Naive thymus-derived CD4-positive, alpha-beta T cell (primary cell): ENCODE measurements at regions of chr19 and their contacts with region 1.

Region 1: GRCh38 chr19:37466798-37467607 is at the start of gene ZNF569:
- DNase-seq: peak; percentile 68 to 95 (median 92)
- ATAC-seq: peak; percentile 79
- H3K4me3 ChIP-seq: peak within 1 kb of the TSS; percentile 79
- H3K4me3 Mint-ChIP-seq: peak within 1 kb of the TSS; percentile 91 to 100 (median 95)
- H3K27ac ChIP-seq: peak within 1 kb of the TSS; percentile 96
- H3K27ac Mint-ChIP-seq: peak within 1 kb of the TSS; percentile 93 to 100 (median 98)
- H3K4me1 ChIP-seq: peaks cover 13 to 16% of the 10 kb centered on the region in 2 donors
- H3K4me1 Mint-ChIP-seq: peaks cover 26 to 54% (median 45%) of the 10 kb centered on the region in 7 donors
- H3K27me3 ChIP-seq: no peaks in the 10 kb centered on the region
- H3K27me3 Mint-ChIP-seq: no peaks in the 10 kb centered on the region
- total RNA-seq, gene ZNF569: 4.1 to 16.4 (median 8.5) TPM

Region 2: DNA sequence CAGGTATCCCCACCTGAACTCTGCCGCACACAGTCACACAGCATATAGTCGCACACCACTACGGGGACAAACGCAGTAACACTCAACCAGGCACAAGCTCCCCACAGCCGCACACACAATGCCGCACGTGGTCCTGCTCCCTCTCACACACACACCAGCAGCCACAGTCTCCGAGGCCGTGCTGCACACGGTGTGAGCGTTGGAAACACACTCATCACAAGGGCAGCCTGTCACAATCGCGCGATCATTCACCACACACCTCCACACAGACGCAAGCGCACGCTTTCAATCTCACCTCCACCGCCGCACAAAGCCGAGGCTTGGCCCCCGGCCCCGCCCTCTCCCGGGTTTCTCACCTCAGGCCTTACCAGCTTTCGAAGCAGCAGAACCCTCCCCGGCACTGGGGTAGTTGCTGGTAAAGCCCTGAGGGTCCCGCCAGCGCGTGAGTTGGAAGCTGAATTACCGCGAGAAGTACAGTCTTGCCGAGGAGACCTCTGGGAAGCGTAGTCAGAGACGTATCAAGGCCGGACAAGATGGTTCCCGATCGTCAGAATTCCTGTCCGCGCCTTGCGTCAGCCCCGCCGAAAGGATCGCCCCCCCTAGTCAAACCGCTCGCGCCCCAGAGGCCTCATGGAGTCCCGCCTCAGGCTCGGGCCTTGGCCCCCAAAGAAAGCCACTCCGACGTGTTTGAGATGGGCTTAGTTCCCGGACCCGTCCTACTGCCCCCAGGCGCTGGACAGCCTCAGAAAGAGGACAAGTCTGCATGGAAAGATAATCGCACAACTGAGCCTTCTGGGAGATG is 977.7 kb before region 1 on chr19 and contains the start of gene ZNF566:
- CTCF ChIA-PET with region 1: no interaction called
- POLR2A ChIA-PET with region 1: interaction called, 3 read pairs
- intact Hi-C with region 1: loop called in 1 of 2 experiments (anchors 1 kb)
- DNase-seq: peak; percentile 74 to 98 (median 94)
- ATAC-seq: peak; percentile 95
- H3K4me3 ChIP-seq: peak within 1 kb of the TSS; percentile 97
- H3K4me3 Mint-ChIP-seq: peak within 1 kb of the TSS; percentile 93 to 99 (median 98)
- H3K27ac ChIP-seq: peak within 1 kb of the TSS; percentile 90
- H3K27ac Mint-ChIP-seq: peak within 1 kb of the TSS; percentile 93 to 99 (median 98)
- H3K4me1 ChIP-seq: peaks cover 9 to 10% of the 10 kb centered on the region in 2 donors
- H3K4me1 Mint-ChIP-seq: peaks cover 22 to 43% (median 30%) of the 10 kb centered on the region in 7 donors
- H3K27me3 ChIP-seq: no peaks in the 10 kb centered on the region
- H3K27me3 Mint-ChIP-seq: no peaks in the 10 kb centered on the region
- total RNA-seq, gene ZNF566: 9.2 to 29.8 (median 9.3) TPM

Region 3: DNA sequence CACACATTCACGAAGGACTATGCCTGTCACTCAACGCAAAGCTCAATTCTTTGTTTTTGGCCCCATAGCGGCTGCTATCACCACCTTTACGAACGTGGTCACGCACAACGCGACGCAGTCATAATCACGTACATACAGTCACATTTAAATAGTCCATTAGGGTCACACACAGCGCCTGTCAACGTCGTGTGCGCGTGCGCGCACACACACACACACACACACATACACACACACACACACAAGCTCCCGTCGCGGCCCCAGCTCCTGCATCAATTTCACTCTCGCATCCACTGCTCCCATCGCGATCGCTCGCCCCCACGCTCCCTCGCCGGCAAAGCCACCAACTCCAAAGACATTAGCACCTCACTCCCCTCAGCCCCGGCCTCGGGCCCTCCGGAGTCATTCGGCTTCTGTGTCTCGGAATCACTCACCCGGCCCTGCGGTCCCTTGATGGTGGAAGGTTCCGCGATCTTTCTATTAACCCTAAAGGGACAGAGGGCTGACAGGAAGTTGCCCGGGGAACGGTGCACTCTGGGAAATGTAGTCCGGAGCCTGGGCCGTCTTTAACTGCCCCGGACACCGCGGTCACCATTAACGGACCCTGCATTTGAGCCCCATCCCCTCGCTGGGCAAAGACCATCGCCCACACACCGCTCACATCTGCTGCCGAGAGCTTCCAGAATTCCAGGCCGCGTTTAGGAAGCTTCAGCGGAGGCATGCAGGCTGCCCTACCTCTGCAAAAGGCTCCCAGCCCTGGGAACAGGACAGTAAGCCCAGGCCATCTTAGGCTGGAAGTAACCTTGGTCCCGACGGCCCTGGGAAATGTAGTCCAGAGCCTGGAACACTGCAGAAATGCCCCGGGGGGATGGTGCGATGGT is 628.9 kb before region 1 on chr19 and contains the start of gene ZNF790:
- CTCF ChIA-PET with region 1: no interaction called
- POLR2A ChIA-PET with region 1: interaction called, 5 read pairs
- intact Hi-C with region 1: loop called (anchors 5 kb)
- DNase-seq: peak; percentile 68 to 91 (median 85)
- ATAC-seq: peak; percentile 95
- H3K4me3 ChIP-seq: peak within 1 kb of the TSS; percentile 92
- H3K4me3 Mint-ChIP-seq: peak within 1 kb of the TSS in 1 of 10 donors; percentile 22
- H3K27ac ChIP-seq: peak within 1 kb of the TSS; percentile 92
- H3K27ac Mint-ChIP-seq: peak within 1 kb of the TSS in 5 of 9 donors; percentile 39 to 65 (median 51)
- H3K4me1 ChIP-seq: peaks cover 6 to 11% of the 10 kb centered on the region in 2 donors
- H3K4me1 Mint-ChIP-seq: peaks cover 0 to 21% (median 14%) of the 10 kb centered on the region in 7 donors
- H3K27me3 ChIP-seq: no peaks in the 10 kb centered on the region
- H3K27me3 Mint-ChIP-seq: no peaks in the 10 kb centered on the region
- total RNA-seq, gene ZNF790: 2.6 to 14.4 (median 7.3) TPM

Region 4: DNA sequence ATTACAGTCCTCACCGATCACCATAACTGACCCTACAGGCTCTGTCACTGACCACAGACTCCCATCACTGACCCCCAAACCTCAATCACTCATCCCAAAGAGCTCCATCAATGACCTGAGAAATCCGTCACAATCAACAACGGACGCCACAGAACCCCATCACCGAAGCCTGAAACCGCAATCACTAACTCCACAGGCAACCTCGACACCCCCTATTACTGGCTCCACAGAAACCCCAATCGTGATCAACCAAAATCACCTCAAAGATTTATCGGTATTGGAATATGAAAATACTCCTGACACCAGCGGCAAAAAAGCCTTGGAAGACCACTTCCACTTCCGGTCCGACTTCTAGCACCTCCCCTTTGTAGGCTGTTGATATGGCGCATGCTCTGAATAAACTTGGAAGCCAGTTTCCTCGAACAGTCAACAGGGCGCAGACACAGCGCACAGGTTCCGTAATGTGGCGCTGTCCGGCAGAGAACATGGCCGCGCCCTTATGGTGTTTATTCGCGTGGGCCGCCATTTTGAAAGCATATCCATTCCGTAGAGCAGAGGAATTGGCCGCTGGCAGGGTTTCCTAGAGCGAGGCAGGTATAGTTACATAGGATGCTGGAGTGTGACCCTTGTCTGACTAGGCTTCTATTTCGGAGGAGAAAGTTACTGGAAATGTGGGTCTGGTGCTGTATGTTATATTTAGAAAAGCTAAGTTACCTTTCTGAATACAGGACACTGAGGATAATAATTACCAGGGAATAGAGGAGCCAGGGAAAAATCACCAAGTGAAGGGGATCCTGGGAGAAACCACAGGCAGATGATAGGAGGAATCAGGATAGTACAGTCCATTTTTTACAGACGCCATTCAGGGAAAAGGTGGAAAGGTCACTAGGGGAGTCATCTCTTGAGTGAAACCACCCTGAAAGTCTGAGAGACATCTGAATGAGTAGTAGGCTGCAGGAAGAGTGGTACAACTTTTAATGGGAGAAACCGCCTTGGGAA is 294.3 kb before region 1 on chr19 and contains the start of gene ZNF585A:
- CTCF ChIA-PET with region 1: no interaction called
- POLR2A ChIA-PET with region 1: no interaction called
- intact Hi-C with region 1: loop called in 1 of 2 experiments (anchors 1 kb)
- DNase-seq: peak; percentile 68 to 92 (median 88)
- ATAC-seq: peak; percentile 100
- H3K4me3 ChIP-seq: peak within 1 kb of the TSS; percentile 90
- H3K4me3 Mint-ChIP-seq: peak within 1 kb of the TSS in 3 of 10 donors; percentile 36 to 73 (median 39)
- H3K27ac ChIP-seq: peak within 1 kb of the TSS; percentile 84
- H3K27ac Mint-ChIP-seq: no peak within 1 kb of the TSS
- H3K4me1 ChIP-seq: no peaks in the 10 kb centered on the region
- H3K4me1 Mint-ChIP-seq: peaks cover 0 to 16% (median 4%) of the 10 kb centered on the region in 7 donors
- H3K27me3 ChIP-seq: no peaks in the 10 kb centered on the region
- H3K27me3 Mint-ChIP-seq: no peaks in the 10 kb centered on the region
- total RNA-seq, gene ZNF585A: 3.5 to 24.3 (median 7.2) TPM

Region 5: DNA sequence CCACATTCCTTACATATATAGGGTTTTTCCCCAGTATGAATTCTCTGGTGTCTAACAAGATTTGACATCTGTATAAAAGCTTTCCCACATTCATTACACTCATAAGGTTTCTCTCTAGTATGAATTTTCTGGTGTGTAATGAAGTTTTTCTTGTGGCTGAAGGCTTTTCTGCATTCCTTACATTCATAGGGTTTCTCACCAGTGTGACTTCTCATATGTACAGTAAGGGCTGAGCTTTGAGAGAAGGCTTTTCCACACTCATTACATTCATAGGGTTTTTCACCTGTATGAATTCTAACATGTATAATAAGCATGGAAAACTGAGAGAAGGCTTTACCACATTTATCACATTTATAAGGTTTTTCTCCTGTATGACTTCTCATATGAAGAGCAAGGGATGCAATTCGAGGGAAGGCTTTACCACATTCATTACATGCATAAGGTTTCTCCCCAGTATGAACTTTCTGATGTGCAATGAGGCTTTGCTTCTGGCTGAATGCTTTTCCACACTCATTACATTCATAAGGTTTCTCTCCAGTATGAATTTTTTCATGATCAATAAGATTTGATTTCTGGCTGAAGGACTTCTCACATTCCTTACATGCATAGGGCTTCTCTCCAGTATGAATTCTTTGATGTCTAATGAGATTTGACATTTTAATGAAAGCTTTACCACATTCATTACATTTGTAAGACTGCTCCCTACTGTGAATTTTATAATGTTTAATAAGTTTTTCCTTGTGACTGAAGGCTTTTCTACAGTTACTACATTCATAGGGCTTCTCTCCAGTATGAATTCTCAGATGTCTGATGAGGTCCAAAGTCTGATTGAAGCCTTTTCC is 53.5 kb before region 1 on chr19:
- CTCF ChIA-PET with region 1: no interaction called
- POLR2A ChIA-PET with region 1: no interaction called
- intact Hi-C with region 1: no loop called
- DNase-seq: no peak
- ATAC-seq: no peak
- H3K4me3 ChIP-seq: no peak overlapping the region
- H3K4me3 Mint-ChIP-seq: no peak overlapping the region
- H3K27ac ChIP-seq: no peak overlapping the region
- H3K27ac Mint-ChIP-seq: no peak overlapping the region
- H3K4me1 ChIP-seq: no peaks in the 10 kb centered on the region
- H3K4me1 Mint-ChIP-seq: no peaks in the 10 kb centered on the region
- H3K27me3 ChIP-seq: no peaks in the 10 kb centered on the region
- H3K27me3 Mint-ChIP-seq: no peaks in the 10 kb centered on the region

Region 6: GRCh38 chr19:37506387-37507166 is 39.6 kb after region 1 on chr19 and contains the start of gene ZNF793:
- CTCF ChIA-PET with region 1: interaction called, 7 read pairs
- POLR2A ChIA-PET with region 1: interaction called, 49 read pairs
- intact Hi-C with region 1: loop called (anchors 1 to 2 kb)
- DNase-seq: peak; percentile 33 to 88 (median 83)
- ATAC-seq: peak; percentile 90
- H3K4me3 ChIP-seq: peak within 1 kb of the TSS; percentile 83
- H3K4me3 Mint-ChIP-seq: no peak within 1 kb of the TSS
- H3K27ac ChIP-seq: peak within 1 kb of the TSS; percentile 90
- H3K27ac Mint-ChIP-seq: no peak within 1 kb of the TSS
- H3K4me1 ChIP-seq: peaks cover 0 to 14% of the 10 kb centered on the region in 2 donors
- H3K4me1 Mint-ChIP-seq: peaks cover 0 to 2% (median 0%) of the 10 kb centered on the region in 7 donors
- H3K27me3 ChIP-seq: no peaks in the 10 kb centered on the region
- H3K27me3 Mint-ChIP-seq: peaks cover 0 to 5% (median 0%) of the 10 kb centered on the region in 5 donors
- total RNA-seq, gene ZNF793: 1.1 to 11.7 (median 6.0) TPM

Region 7: DNA sequence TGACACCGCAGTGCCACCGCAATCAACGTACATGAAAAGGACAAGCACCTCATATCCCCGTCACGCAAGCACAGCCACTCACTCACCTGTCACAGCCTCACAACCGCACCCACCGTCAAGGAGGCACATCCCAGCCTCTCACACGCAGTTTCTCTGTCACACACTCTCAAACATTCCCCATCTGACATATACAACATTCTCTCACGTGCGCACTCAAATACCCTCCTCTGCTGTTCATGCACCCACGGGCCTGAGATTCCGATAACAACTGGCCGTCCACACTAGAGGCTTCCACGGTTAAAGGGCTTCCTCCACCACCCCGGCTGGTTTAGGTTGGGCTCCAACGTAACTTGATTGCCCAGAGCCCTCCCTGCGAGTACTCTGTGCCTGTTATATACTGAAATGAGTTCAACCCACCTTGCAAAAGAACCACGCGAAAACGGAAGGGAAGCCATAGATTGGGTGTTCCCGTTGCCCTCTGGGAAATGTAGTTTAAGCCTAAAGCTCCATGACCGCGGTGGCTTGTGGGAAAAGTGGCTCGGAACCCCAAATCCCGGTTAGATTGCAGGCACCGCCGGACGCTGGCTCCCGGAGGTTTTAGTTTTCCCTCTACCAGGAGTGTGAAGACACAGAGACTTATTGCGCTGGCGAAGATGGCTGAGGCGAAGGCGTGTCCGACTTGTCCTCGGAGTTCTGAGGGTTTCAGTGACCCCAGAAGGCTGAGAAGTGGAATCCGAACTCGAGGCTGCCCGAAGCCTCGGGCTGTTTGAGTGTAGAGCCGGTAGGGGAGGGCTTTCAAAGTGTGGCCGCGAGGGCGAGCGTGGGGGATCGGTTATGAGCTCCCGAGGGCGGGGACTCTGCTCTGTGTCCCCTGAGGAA is 312.4 kb after region 1 on chr19 and contains the start of gene ZNF573:
- CTCF ChIA-PET with region 1: no interaction called
- POLR2A ChIA-PET with region 1: interaction called, 8 read pairs
- intact Hi-C with region 1: loop called (anchors 1 kb)
- DNase-seq: peak; percentile 62 to 99 (median 94)
- ATAC-seq: peak; percentile 94
- H3K4me3 ChIP-seq: peak within 1 kb of the TSS; percentile 82
- H3K4me3 Mint-ChIP-seq: peak within 1 kb of the TSS; percentile 91 to 98 (median 96)
- H3K27ac ChIP-seq: peak within 1 kb of the TSS; percentile 99
- H3K27ac Mint-ChIP-seq: peak within 1 kb of the TSS; percentile 89 to 100 (median 98)
- H3K4me1 ChIP-seq: peaks cover 6% of the 10 kb centered on the region in 2 donors
- H3K4me1 Mint-ChIP-seq: peaks cover 9 to 53% (median 48%) of the 10 kb centered on the region in 7 donors
- H3K27me3 ChIP-seq: no peaks in the 10 kb centered on the region
- H3K27me3 Mint-ChIP-seq: no peaks in the 10 kb centered on the region
- total RNA-seq, gene ZNF573: 5.9 to 43.8 (median 16.6) TPM